HEK293T (cell line): ENCODE measurements at regions of chr3 and their contacts with region 1.

Region 1: DNA sequence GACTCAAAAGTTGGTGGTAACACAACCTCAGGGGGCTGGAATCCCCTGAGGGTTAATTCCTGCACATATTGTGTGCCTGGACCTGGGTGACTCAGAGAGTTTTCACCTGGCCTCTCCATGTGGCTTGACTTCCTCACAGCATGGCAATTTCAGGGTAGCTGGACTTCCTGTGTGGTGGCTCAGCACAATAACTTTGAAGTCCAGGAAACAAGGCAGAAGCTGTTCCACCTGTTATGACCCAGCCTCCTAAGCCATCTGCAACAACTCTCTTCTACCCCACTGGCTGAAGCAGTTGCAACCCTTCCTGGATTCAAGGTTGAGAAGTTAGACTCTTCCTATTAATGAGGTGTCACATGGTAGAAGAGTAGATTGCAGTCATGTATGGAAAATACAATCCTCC is 58.4 kb downstream of the EDEM1 start:
- DNase-seq: no peak

Region 2: GRCh38 chr3:5232570-5232969 is 13.4 kb before region 1 on chr3:
- CTCF ChIA-PET with region 1: interaction called, 13 read pairs
- POLR2A ChIA-PET with region 1: no interaction called
- DNase-seq: no peak

Region 3: GRCh38 chr3:5933045-5933444 is 687.1 kb after region 1 on chr3:
- CTCF ChIA-PET with region 1: no interaction called
- POLR2A ChIA-PET with region 1: no interaction called
- DNase-seq: no peak